ENCODE measurements at regions of chr10 and their contacts with region 1.

Region 1: DNA sequence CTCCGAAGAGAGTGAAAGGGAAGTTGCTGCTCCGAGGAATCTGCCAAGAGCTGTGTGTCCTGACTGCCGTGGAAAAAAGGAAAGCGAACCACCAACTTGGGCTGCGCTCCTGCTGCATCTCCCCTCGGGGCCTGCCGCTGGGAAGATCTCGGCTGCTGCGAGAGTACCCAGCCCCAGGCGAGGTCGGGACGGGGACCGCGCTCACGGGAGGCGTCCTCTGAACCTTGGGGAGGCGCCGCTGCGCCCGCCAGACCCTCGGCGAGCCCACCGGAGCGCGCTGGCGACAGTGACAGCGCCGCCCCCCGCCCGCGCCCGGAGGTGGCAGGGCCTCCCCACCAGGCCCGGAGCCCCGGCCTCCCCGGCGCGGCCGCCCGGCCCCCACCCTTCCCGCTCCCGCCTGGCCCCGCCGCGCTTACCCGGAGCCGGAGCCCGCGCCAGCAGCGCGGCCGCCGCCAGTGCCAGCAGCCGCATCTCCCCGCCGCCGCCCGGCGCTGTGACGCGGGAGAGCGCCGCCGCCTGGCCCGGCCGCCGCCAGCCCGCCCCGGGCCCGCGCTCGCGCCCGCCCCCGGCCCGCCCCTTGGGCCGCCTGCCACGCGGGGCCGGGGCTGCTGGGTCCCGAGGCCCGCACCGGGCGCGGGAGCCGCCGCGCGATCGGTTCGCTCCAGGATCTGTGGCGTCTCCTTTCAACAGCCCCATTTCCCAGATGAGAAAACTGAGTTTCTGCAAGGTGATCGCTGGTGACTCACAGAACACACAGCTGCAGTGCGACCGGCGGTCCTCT is at the start of gene VSTM4:
- DNase-seq: no peak
- H3K4me3 Mint-ChIP-seq: peak within 1 kb of the TSS; percentile 53
- H3K27ac Mint-ChIP-seq: no peak within 1 kb of the TSS
- H3K4me1 Mint-ChIP-seq: peaks cover 4% of the 10 kb centered on the region
- H3K27me3 Mint-ChIP-seq: peaks cover 46% of the 10 kb centered on the region
- total RNA-seq, gene VSTM4: 0.50 and 0.63 TPM in 2 replicates

Region 2: DNA sequence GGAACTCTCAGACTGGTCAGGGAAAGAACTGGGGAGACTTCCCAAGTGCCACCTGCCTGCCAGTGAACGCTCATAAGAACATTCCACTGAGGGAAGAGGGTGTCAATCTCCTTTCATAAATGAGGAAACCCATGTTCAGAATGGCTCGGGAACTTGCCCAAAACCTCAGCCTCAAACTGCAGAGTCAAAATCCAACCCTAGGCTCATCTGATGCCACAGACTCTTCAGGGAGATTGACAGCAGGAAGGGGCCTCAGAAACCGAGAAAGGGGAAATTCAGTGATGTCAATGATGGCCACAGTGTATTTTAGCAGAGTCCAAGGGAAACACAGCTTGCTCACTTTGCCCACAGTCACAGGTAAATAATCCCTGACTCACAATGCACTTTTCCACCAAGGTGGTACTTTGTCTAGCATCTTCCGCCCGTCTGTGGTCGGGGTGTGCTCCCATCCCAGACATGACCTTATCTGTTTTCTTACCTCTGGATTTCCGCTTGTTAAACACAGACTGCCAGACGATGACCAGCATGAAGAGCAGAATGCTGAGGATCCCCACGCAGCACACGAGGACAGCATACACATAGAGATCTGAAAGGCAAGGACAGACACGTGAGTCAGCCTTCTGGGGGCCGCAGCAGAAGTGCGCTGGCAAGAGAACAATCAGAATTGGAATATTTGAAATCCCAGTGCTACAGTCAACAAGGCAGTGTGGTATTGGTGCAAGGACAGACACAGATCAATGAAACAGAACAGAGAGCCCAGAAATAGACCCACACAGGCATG is 38.3 kb before region 1 on chr10:
- intact Hi-C with region 1: loop called (anchors 5 kb)
- DNase-seq: peak; percentile 61
- H3K4me3 Mint-ChIP-seq: peak overlapping the region; percentile 54
- H3K27ac Mint-ChIP-seq: peak overlapping the region; percentile 81
- H3K4me1 Mint-ChIP-seq: peaks cover 28% of the 10 kb centered on the region
- H3K27me3 Mint-ChIP-seq: peaks cover 3% of the 10 kb centered on the region

Measured in activated CD4-positive, alpha-beta T cell treated with anti-CD3 and anti-CD28 coated beads, Interleukin-2, amount 10 ng/mL, durations not matched to agents 24 days and 14 days (primary cell).